WTC11 (cell line): ENCODE measurements at regions of chr1 and their contacts with region 1.

Region 1: GRCh38 chr1:28736450-28737306 is at the start of gene YTHDF2:
- DNase-seq: peak; percentile 98
- ATAC-seq: peak; percentile 88
- H3K4me3 Mint-ChIP-seq: peak within 1 kb of the TSS; percentile 94
- H3K27ac Mint-ChIP-seq: peak within 1 kb of the TSS; percentile 100
- H3K4me1 Mint-ChIP-seq: peaks cover 40% of the 10 kb centered on the region
- H3K27me3 Mint-ChIP-seq: no peaks in the 10 kb centered on the region
- CTCF ChIP-seq: peak; percentile 86
- total RNA-seq, gene YTHDF2: 111 to 126 TPM (median 114 TPM) in 3 replicates

Region 2: GRCh38 chr1:28560886-28561285 is 175.8 kb before region 1 on chr1:
- CTCF ChIA-PET with region 1: no interaction called
- POLR2A ChIA-PET with region 1: no interaction called
- DNase-seq: no peak
- ATAC-seq: no peak
- H3K4me3 Mint-ChIP-seq: no peak overlapping the region
- H3K27ac Mint-ChIP-seq: no peak overlapping the region
- H3K4me1 Mint-ChIP-seq: no peaks in the 10 kb centered on the region
- H3K27me3 Mint-ChIP-seq: no peaks in the 10 kb centered on the region
- CTCF ChIP-seq: no peak

Region 3: GRCh38 chr1:28642847-28643635 is 93.6 kb before region 1 on chr1 and contains the start of gene TAF12:
- CTCF ChIA-PET with region 1: interaction called, 19 read pairs
- POLR2A ChIA-PET with region 1: interaction called, 26 read pairs
- DNase-seq: peak; percentile 91
- ATAC-seq: peak; percentile 88
- H3K4me3 Mint-ChIP-seq: peak within 1 kb of the TSS; percentile 99
- H3K27ac Mint-ChIP-seq: peak within 1 kb of the TSS; percentile 99
- H3K4me1 Mint-ChIP-seq: peaks cover 23% of the 10 kb centered on the region
- H3K27me3 Mint-ChIP-seq: no peaks in the 10 kb centered on the region
- CTCF ChIP-seq: peak; percentile 31; the same call in 1 of the 2 replicates
- total RNA-seq, gene TAF12: 18.6 to 23.3 TPM (median 22.1 TPM) in 3 replicates

Region 4: DNA sequence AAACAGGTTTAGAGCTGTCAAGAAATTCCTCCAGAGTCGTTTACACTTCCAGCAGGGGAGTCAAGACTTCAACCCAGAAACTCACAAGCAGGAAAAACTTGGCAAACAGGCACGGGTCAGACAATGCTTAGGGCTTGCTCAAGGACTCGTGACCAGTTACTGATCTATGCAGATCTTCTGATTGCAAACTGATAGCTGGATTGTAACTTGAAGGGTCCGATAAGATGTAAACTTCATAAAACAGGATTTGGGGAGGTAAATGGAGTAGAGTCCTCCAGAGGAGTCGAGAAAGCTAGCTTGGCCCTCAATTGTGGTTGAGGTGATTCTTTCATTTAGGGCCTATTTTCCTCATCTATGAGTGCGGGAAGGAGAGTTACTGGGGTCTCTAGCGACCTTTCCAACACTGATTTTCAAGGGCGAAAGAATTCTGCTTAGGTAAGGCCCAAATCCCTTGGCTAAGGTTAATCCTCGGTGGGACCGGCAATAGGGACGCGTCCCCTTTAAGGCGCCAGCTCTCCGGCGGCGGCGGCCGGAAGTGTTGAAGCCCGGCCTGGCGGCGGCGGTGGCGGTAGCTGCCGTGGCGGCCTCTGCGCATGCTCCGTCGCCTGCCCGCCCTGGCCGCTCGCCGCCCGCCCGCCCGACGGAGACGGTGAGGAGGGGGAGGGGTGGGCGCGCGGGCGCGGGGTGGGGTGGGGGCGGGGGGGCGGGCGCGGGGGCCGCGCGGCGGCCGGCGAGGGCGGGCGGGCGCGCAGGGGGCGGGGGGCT is 68.3 kb before region 1 on chr1 and contains the start of gene GMEB1:
- CTCF ChIA-PET with region 1: interaction called, 6 read pairs
- POLR2A ChIA-PET with region 1: interaction called, 17 read pairs
- DNase-seq: peak; percentile 85
- ATAC-seq: peak; percentile 73
- H3K4me3 Mint-ChIP-seq: peak within 1 kb of the TSS; percentile 87
- H3K27ac Mint-ChIP-seq: peak within 1 kb of the TSS; percentile 99
- H3K4me1 Mint-ChIP-seq: peaks cover 21% of the 10 kb centered on the region
- H3K27me3 Mint-ChIP-seq: no peaks in the 10 kb centered on the region; the same call in 1 of the 2 replicates
- CTCF ChIP-seq: no peak
- total RNA-seq, gene GMEB1: 25.4 to 29.4 TPM (median 26.4 TPM) in 3 replicates

Region 5: DNA sequence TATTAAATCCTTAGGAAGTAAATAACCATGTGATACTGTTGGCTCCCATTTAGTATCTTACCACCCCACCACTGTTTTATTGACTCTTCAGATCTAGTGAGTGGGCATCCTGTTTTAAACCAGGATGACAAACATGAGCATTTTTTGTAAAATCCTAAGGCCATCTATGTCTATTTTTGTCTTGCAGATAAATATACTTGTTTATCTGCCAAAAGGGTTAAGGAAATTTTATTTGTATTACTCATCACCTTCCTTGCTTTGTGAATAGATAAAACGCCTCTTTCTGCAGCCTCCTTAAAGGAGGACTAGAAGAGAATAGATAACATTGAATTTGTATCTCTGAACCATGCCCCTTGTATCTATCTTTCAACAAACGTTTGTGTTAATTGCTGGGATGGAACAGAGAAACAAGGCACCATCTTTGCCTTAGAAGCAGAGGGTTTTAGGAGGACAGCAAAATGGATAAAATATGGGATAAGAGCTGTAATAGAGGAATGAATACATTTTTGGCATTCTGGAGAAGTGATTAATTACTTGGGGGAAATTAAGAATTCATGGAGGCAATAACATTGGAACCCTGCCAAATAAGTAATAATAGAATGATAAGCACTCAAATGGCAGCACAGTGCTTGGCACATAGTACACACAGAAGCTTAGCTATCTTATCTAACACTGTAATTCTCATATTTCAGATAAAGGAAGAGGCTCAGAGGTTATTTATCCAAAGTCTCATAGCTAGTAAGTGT is 14.8 kb after region 1 on chr1:
- CTCF ChIA-PET with region 1: interaction called, 12 read pairs
- POLR2A ChIA-PET with region 1: interaction called, 17 read pairs
- DNase-seq: no peak
- ATAC-seq: no peak
- H3K4me3 Mint-ChIP-seq: no peak overlapping the region
- H3K27ac Mint-ChIP-seq: peak overlapping the region; percentile 26; the same call in 1 of the 2 replicates
- H3K4me1 Mint-ChIP-seq: peaks cover 39% of the 10 kb centered on the region
- H3K27me3 Mint-ChIP-seq: no peaks in the 10 kb centered on the region
- CTCF ChIP-seq: no peak

Region 6: GRCh38 chr1:28775121-28775944 is 38.7 kb after region 1 on chr1:
- CTCF ChIA-PET with region 1: interaction called, 12 read pairs
- POLR2A ChIA-PET with region 1: interaction called, 11 read pairs
- DNase-seq: peak; percentile 77
- ATAC-seq: peak; percentile 91
- H3K4me3 Mint-ChIP-seq: peak overlapping the region; percentile 69
- H3K27ac Mint-ChIP-seq: peak overlapping the region; percentile 88
- H3K4me1 Mint-ChIP-seq: 0 out of 2 replicates have a peak, but pooled peaks cover 3% of the 10 kb centered on the region
- H3K27me3 Mint-ChIP-seq: no peaks in the 10 kb centered on the region
- CTCF ChIP-seq: no peak